ENCODE measurements at regions of chr9 and their contacts with region 1.

Region 1: DNA sequence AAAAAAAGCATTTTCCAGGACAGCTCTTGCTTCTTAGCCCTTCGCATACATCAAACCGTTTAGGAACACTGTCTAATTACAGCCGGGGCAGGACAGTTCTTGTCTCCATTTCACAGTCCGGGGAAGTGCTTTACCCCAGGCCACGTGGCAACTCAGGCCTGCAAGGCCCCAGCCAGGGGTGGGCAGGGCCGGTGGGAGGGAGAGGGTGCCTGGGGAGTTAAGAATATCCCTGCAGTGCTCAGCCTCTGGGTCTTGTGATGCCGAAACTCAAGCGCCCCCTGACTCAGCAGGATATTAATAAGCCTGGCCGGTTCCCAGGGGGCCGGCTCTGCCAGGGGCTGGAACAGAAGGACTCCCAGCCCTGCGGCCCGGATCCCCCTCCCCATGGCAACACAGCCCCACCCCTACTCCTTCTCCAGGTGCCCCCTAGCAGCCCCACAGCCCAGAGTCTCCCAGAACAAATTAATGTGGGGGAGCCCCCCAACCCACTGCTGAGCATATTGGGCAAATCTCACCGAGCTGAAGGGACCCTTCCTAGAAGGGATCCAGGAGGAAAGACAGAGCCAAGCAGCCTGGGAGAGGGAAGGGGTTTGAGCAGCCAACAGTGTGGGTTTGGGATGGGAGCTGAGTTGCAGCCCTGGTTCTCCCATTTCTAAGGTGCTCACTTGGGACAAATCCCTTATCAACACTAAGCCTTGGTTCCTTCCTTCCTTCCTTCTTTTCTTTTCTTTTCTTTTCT is 45.3 kb downstream of the PLPP7 start:
- DNase-seq: peak; percentile 74 to 85
- ATAC-seq: peak; percentile 79 to 94 (median 90)
- H3K4me3 ChIP-seq: no peak overlapping the region
- H3K27ac ChIP-seq: peak overlapping the region; percentile 46 to 89 (median 78)
- H3K4me1 ChIP-seq: peaks cover 0 to 41% (median 19%) of the 10 kb centered on the region in 9 donors
- H3K27me3 ChIP-seq: no peaks in the 10 kb centered on the region
- CTCF ChIP-seq: no peak

Region 2: DNA sequence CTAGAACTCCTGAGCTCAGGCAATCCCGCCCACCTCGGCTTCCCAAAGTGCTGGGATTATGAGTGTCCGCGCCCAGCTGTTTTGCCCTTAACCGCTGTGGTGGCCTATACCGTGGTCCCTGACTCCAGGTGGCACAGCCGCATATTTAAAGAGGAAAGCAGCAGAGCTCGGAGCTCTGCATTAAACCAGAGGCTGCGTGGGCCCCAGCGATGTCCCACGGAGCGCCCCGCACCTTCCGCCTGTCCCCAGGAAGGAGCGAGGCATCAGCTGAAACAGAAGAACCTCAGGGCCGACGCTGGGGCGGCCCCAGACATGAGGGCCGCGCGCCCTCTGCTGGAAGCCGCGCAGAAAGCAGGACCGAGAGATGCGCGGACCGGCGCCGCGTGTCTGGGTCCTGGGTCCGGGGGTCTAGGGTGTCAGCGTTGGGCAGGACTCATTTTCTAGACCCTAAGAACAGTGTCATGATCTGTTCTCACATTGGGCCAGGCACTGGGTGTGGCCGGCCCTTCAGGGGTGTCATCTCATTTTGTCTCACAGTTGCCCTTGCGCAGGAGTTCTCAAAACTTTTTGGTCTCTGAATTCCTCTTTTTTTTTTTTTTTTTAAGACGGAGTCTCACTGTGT is 288.1 kb before region 1 on chr9:
- intact Hi-C with region 1: loop called in 2 of 10 experiments (anchors 10 kb)
- DNase-seq: peak; percentile 39 to 69
- ATAC-seq: peak; percentile 80 to 90 (median 84)
- H3K4me3 ChIP-seq: no peak overlapping the region
- H3K27ac ChIP-seq: no peak overlapping the region
- H3K4me1 ChIP-seq: peaks cover 0 to 7% (median 0%) of the 10 kb centered on the region in 9 donors
- H3K27me3 ChIP-seq: peaks cover 0 to 6% (median 0%) of the 10 kb centered on the region in 7 donors
- CTCF ChIP-seq: peak; percentile 77 to 97 (median 94)

Region 3: DNA sequence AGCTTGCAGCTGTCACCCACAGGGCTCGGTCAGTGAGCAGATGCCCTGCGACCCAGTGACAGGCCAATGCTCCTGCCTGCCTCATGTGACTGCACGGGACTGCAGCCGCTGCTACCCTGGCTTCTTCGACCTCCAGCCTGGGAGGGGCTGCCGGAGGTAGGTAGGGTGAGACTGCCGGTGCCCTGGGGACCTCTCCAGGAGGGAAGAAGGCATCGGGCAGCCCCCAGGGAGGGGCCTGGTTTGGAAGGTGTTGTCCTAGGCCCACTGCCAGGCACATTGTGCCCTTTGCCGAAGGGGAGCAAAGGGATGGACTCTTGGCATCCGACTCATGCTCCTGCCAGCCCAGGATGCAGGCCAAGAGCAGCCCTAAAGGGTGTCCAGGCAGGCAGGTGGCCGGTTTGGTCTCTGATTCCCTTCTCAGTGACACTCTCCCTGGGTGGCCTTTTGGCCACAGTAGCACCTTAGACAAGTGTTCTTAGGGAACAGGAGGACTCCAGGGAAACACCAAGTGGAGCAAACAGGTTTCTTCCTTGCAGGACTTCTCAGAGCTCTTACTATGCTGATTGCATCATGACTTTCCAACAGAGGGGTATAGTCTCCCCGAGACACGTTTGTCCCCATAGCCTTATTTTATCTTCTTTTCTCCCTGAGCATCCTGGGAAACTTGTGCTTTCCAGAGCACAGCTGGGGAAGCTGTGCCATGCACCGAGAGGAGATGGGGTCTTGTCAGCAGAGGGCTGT is 266.6 kb before region 1 on chr9:
- intact Hi-C with region 1: loop called in 1 of 10 experiments (anchors 5 kb)
- DNase-seq: no peak
- ATAC-seq: peak in 6 of 8 donors; percentile 30 to 85 (median 44)
- H3K4me3 ChIP-seq: no peak overlapping the region
- H3K27ac ChIP-seq: no peak overlapping the region
- H3K4me1 ChIP-seq: peaks cover 0 to 10% (median 0%) of the 10 kb centered on the region in 9 donors
- H3K27me3 ChIP-seq: no peaks in the 10 kb centered on the region
- CTCF ChIP-seq: no peak

Region 4: DNA sequence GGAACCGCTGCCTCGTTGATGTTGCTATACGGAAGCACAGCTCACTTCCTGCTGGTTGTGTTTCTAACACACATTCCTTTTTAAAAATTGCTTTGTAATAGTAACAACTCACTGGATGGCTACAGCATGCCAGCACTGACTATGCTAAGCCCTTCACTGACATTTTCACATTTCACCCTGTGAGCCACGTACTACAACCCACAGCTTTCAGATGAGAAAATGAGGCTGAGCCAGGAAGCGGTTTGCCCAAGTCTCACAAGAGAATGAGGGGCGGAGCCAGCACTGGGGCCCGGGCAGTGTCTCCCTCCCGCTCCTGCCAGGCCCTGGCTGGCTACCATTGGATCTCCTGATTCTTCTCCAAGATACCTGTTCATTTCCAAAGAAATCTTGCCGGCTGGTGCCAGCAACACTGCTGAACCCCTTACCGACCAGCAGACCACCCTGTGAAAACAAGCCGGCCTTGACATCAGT is 96.8 kb before region 1 on chr9:
- intact Hi-C with region 1: loop called in 7 of 10 experiments (anchors 5 to 10 kb)
- DNase-seq: peak; percentile 75
- ATAC-seq: peak; percentile 30 to 68 (median 62)
- H3K4me3 ChIP-seq: peak overlapping the region in 5 of 10 donors; percentile 2 to 25 (median 9)
- H3K27ac ChIP-seq: peak overlapping the region; percentile 46 to 95 (median 90)
- H3K4me1 ChIP-seq: peaks cover 10 to 62% (median 43%) of the 10 kb centered on the region in 9 donors
- H3K27me3 ChIP-seq: no peaks in the 10 kb centered on the region
- CTCF ChIP-seq: no peak

Region 5: DNA sequence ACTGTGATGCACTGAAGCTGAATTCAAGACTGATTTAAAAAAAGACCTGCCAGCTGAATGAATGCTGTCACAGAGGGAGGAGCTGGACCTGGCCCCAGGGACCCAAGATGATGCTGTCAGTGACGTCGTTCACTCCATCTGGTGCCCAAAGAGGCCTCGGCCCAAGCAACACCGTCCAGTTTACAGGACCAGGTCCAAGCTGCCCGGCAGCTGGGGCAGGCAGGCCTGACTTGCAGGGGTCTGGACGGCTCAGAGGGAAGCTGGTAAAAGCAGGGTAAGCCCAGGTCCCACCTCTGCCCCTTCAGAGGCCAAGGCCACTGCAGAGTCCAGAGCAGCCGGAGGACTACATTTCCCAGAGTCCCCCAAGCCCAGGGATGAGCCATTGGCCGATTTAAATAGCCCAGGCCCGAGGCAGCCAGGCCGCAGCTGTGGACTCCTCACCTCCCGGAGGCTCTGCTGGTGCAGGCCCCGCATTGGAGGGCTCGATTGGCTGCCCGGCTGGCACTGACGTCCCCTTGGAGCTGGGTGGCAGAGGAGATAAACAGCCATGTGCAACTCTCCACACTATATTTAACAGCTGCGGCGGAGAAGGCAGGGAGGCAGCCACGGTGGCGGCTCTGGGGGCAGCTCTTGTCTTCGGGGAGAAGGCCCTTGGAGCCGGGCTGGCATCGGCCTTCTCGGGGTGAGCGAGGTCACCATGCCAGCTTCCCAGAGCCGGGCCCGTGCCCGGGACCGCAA is 45.3 kb before region 1 on chr9 and contains the start of gene PLPP7:
- intact Hi-C with region 1: loop called in 1 of 10 experiments (anchors 5 kb)
- DNase-seq: peak; percentile 85 to 90
- ATAC-seq: peak; percentile 85 to 94 (median 92)
- H3K4me3 ChIP-seq: peak within 1 kb of the TSS; percentile 58 to 79 (median 74)
- H3K27ac ChIP-seq: peak within 1 kb of the TSS; percentile 89 to 98 (median 94)
- H3K4me1 ChIP-seq: peaks cover 10 to 70% (median 40%) of the 10 kb centered on the region in 9 donors
- H3K27me3 ChIP-seq: no peaks in the 10 kb centered on the region
- CTCF ChIP-seq: no peak
- total RNA-seq, gene PLPP7: 76.1 to 140 (median 102) TPM